Left cardiac atrium (tissue), 4 donors: ENCODE measurements at regions of chr5 and their contacts with region 1.

Region 1: DNA sequence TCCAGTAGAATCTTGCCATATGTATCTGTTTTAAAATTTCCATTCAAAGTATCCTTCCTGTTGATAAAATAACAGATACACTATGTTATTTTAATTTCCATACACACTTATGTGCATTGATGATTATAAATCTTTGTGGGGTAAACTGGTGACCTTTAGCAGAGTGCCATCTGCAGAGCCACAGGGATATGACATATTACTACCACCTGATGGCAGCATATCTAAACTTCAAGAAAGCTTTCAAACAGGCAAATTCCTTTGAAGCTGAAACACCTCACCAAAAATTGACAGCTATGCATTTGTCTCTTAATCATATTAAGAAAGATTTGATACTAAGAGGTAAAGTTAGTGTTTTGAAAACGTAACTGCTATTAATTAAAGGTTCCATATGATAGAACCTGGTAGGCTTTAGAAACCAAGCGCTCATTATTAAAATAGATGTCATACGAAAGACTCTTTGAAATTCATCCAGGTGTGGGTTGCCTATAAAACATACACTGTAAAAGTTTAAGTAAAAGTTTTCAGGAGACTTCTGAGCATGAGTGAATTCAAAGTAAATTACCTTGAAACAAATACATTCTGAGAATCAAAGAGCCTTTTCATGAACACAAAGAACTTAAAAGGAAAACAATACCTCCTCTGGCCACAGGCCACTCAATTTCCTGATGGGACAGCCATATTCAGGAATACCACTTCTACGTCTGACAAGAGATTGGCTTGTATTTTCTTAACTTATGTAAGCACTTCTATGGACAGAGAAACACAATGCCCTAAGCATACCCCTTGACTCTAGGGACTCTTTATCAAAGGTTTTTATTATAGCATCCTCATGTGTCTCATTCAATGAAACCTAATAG is 93.3 kb downstream of the KIAA0825 start:
- DNase-seq: no peak
- ATAC-seq: peak in 1 of 2 donors; percentile 36

Region 2: DNA sequence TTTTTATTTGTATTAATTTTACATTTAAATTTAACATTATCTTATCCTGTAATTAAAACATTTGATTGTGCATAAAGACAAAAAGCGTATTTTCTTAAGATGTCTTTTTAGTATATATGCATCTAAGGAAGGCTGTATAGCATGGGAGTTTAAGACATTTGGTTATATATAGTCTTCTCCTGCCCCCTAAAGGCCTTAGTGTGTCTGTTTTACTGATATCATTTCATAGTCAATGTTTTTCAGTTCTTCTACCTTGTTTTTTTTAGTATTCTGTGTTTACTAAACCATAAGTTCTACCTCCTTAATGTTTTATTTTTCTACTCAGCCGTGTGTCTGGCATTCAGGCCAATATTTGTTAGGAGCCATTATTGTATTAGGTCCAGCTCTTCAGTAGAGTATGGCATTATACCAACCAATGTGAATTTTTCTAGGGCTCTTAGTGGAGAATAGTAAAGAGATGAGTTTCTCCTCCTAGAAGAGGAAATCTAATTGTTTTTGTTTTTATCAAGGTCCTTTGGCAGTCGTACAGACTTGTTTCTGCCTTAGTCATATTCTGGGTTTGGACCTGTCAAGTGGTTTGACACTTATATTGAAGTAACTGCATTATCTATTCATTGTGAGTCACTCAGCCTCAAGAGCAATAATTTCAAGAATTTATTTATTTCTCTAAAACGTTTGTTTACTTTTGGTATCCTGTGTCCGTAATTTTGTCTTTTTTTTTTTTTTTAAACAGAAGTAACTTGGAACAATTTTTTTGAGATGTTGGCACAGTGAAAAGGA is 168.2 kb after region 1 on chr5:
- intact Hi-C with region 1: loop called in 1 of 2 experiments (anchors 10 kb)
- DNase-seq: no peak
- ATAC-seq: peak; percentile 68 to 89

Region 3: DNA sequence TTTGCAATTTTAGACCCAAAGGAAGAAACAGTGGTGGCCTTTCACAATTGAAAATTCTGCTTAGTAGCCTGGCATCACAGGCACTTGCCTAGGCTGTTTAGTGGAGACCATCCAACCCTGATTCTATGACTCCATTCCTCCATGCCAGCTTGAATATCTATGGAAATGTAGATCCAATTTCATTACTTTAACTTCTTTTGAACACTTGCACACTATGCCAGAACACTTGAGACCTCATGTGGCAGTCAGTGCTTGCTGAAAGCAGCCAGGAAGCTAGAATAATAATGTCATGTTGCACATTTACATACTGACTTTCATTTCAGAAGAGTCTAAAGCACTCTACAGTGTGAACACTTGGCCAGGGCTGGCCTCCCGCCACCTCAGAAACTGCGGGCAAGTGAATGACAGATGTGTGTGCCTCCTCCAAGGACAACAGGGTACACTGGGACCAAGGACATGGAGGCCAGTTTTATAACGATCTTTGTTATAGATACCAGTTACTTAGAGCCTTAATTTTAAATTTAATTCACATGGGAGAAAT is 190.7 kb after region 1 on chr5:
- intact Hi-C with region 1: loop called in 1 of 2 experiments (anchors 10 kb)
- DNase-seq: peak; percentile 43
- ATAC-seq: peak; percentile 79 to 87

Region 4: GRCh38 chr5:94736498-94736897 is 211.4 kb after region 1 on chr5:
- intact Hi-C with region 1: loop called in 1 of 2 experiments (anchors 5 kb)
- DNase-seq: no peak
- ATAC-seq: no peak